GM10248 (cell line): ENCODE measurements at regions of chr11 and their contacts with region 1.

Region 1: DNA sequence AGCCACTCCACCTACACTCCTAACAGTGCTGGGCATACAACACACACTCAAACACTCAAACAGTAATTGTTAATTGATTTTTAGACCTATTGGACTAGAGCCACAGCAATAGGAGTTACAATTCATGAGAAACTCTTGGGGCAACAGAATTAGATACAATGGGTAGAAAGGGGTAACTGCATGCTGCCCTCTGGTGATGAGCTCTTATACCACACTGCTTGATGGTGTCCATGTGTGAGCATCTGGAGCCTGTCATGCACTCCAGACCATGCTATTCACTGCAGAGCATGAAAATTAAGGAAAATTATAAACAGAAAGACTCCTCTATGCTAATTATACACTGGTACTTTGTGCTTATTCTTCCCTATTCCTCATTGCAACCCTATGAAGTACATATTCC is 975.5 kb upstream of the CCDC90B start:
- DNase-seq: no peak
- CTCF ChIP-seq: no peak

Region 2: GRCh38 chr11:84249344-84250136 is 12.2 kb before region 1 on chr11:
- CTCF ChIA-PET with region 1: interaction called, 20 read pairs
- POLR2A ChIA-PET with region 1: no interaction called
- DNase-seq: no peak
- CTCF ChIP-seq: peak; percentile 4